ENCODE measurements at regions of chr6 and their contacts with region 1.

Region 1: GRCh38 chr6:108152446-108152845 is 13.4 kb upstream of the NR2E1 start:
- DNase-seq: no peak
- H3K4me3 ChIP-seq: no peak overlapping the region
- H3K27ac ChIP-seq: no peak overlapping the region
- H3K4me1 ChIP-seq: peaks cover 6% of the 10 kb centered on the region
- H3K27me3 ChIP-seq: peaks cover 6% of the 10 kb centered on the region
- CTCF ChIP-seq: no peak

Region 2: DNA sequence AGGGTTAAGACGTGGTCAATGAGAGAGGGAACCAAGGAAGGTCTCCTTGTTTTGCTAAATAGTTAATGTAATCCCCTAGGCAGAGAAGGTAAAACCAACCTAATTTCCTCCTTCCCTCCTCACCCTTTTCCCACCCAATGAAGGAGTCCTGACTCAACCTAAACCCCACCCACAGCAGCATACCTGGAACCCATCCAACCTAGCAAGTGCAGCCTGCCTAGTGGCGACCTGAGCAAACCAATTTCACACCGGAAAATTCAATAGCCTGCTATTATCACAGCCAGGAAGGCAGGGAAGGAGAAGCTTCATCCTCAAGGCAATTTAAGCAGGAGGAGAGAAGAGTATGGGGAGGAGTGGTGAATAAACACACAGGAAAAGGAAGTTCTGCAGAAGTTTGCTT is 124.9 kb before region 1 on chr6:
- CTCF ChIA-PET with region 1: interaction called, 43 read pairs
- dilution Hi-C with region 1: no loop called
- in situ Hi-C with region 1: no loop called
- intact Hi-C with region 1: no loop called
- DNase-seq: peak; percentile 17
- H3K4me3 ChIP-seq: no peak overlapping the region
- H3K27ac ChIP-seq: no peak overlapping the region
- H3K4me1 ChIP-seq: no peaks in the 10 kb centered on the region
- H3K27me3 ChIP-seq: no peaks in the 10 kb centered on the region
- CTCF ChIP-seq: no peak

Region 3: GRCh38 chr6:108250240-108250866 is 97.9 kb after region 1 on chr6:
- CTCF ChIA-PET with region 1: no interaction called
- dilution Hi-C with region 1: no loop called
- in situ Hi-C with region 1: no loop called
- intact Hi-C with region 1: no loop called
- DNase-seq: peak; percentile 5
- H3K4me3 ChIP-seq: no peak overlapping the region
- H3K27ac ChIP-seq: no peak overlapping the region
- H3K4me1 ChIP-seq: no peaks in the 10 kb centered on the region
- H3K27me3 ChIP-seq: no peaks in the 10 kb centered on the region
- CTCF ChIP-seq: peak; percentile 4 to 10